ENCODE measurements at regions of chr14 and their contacts with region 1.

Region 1: GRCh38 chr14:91177073-91178034 is 63.5 kb downstream of the DGLUCY start:
- DNase-seq: peak; percentile 40 to 89 (median 63)
- ATAC-seq: peak; percentile 77 to 88 (median 87)
- H3K4me3 ChIP-seq: no peak overlapping the region
- H3K4me3 Mint-ChIP-seq: no peak overlapping the region
- H3K27ac ChIP-seq: peak overlapping the region; percentile 67
- H3K27ac Mint-ChIP-seq: peak overlapping the region; percentile 92 to 94
- H3K4me1 ChIP-seq: peaks cover 0 to 11% of the 10 kb centered on the region in 2 experiments
- H3K4me1 Mint-ChIP-seq: peaks cover 12 to 17% (median 13%) of the 10 kb centered on the region in 3 donors
- H3K27me3 ChIP-seq: no peaks in the 10 kb centered on the region
- H3K27me3 Mint-ChIP-seq: no peaks in the 10 kb centered on the region

Region 2: GRCh38 chr14:90903101-90903500 is 274.3 kb before region 1 on chr14:
- CTCF ChIA-PET with region 1: interaction called, 21 to 71 read pairs
- POLR2A ChIA-PET with region 1: interaction called in 1 of 2 experiments, 3 read pairs
- DNase-seq: peak; percentile 13 to 77 (median 47)
- ATAC-seq: peak; percentile 64 to 90 (median 81)
- H3K4me3 ChIP-seq: no peak overlapping the region
- H3K4me3 Mint-ChIP-seq: no peak overlapping the region
- H3K27ac ChIP-seq: no peak overlapping the region
- H3K27ac Mint-ChIP-seq: peak overlapping the region in 1 of 2 donors; percentile 48
- H3K4me1 ChIP-seq: no peaks in the 10 kb centered on the region
- H3K4me1 Mint-ChIP-seq: peaks cover 0 to 3% (median 2%) of the 10 kb centered on the region in 3 donors
- H3K27me3 ChIP-seq: no peaks in the 10 kb centered on the region
- H3K27me3 Mint-ChIP-seq: no peaks in the 10 kb centered on the region

Region 3: GRCh38 chr14:91332151-91332985 is 155.0 kb after region 1 on chr14:
- CTCF ChIA-PET with region 1: no interaction called
- POLR2A ChIA-PET with region 1: no interaction called
- DNase-seq: no peak
- ATAC-seq: no peak
- H3K4me3 ChIP-seq: no peak overlapping the region
- H3K4me3 Mint-ChIP-seq: peak overlapping the region in 1 of 3 donors; percentile 75
- H3K27ac ChIP-seq: peak overlapping the region; percentile 80
- H3K27ac Mint-ChIP-seq: peak overlapping the region; percentile 96 to 98
- H3K4me1 ChIP-seq: peaks cover 27 to 70% of the 10 kb centered on the region in 2 experiments
- H3K4me1 Mint-ChIP-seq: peaks cover 74 to 80% (median 78%) of the 10 kb centered on the region in 3 donors
- H3K27me3 ChIP-seq: no peaks in the 10 kb centered on the region
- H3K27me3 Mint-ChIP-seq: no peaks in the 10 kb centered on the region